Psoas muscle (tissue), 8 donors: ENCODE measurements at regions of chr12 and their contacts with region 1.

Region 1: GRCh38 chr12:5388581-5389535 is 43.0 kb upstream of the NTF3 start:
- DNase-seq: no peak
- ATAC-seq: no peak
- H3K4me3 ChIP-seq: no peak overlapping the region
- H3K27ac ChIP-seq: no peak overlapping the region
- H3K4me1 ChIP-seq: no peaks in the 10 kb centered on the region
- H3K27me3 ChIP-seq: no peaks in the 10 kb centered on the region
- CTCF ChIP-seq: no peak

Region 2: DNA sequence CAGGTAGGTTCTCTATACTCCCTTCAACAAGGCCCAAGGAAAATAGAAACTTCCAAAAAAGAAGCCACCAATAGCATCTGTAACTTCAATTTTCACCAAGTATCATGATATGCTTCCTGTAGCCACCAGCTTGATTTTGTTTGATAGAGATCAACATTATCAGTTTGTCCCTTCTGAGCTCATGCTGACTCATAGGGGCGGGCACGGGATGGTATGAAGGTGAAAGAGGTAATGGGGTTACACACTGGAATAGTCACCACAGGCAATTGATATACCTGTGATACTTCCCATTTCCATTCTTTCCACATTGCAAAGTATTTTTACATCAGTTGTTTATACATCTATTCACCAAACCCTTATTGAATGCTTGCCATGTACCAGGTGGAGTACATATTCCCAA is 211.1 kb before region 1 on chr12:
- intact Hi-C with region 1: loop called in 1 of 2 experiments (anchors 5 kb)
- DNase-seq: no peak
- ATAC-seq: no peak
- H3K4me3 ChIP-seq: no peak overlapping the region
- H3K27ac ChIP-seq: no peak overlapping the region
- H3K4me1 ChIP-seq: peaks cover 7% of the 10 kb centered on the region
- H3K27me3 ChIP-seq: no peaks in the 10 kb centered on the region
- CTCF ChIP-seq: no peak